Activated CD4-positive, alpha-beta T cell treated with anti-CD3 and anti-CD28 coated beads, Interleukin-2, amount 10 ng/mL, durations not matched to agents 24 days and 14 days (primary cell): ENCODE measurements at regions of chr17 and their contacts with region 1.

Region 1: GRCh38 chr17:38868817-38869525 is 887 bp upstream of the LASP1 start:
- DNase-seq: peak; percentile 95
- H3K4me3 Mint-ChIP-seq: peak overlapping the region; percentile 97
- H3K27ac Mint-ChIP-seq: peak overlapping the region; percentile 96
- H3K4me1 Mint-ChIP-seq: peaks cover 42% of the 10 kb centered on the region
- H3K27me3 Mint-ChIP-seq: peaks cover 2% of the 10 kb centered on the region

Region 2: DNA sequence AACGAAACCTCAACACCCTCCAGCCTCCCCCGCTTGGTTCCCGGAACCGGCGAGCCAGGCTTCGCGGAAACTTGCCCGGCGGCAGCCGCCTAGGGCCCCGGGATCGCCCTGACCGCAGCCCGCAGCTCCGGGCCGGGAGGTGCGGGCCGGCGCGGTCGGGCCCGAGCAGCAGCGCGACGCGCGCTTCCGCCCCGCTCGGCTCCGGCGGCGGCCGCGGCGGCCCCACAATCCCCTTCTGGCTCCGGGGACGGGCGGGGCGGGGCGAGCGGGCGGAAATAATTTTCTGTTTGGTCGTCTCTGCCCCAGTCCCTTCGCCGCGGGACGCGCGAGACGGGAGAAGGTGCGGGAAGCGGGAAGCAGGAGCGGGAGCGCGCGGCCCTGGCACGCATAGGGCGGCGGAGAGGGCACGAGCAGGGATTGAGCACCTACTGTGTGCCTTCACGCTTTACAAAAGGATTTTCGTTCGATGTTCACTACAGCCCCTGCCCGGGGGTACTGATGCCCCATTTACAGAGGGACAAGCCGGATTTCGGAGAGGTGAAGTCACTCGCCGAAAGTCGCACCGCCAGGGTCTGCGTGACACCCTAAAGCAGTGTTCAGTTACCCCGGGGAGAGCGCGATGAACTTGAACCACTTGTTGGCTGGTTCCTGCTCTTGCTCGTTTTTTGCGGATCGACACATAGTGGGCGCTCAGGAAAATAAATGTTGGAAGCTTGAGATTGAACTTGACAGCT is 166.6 kb before region 1 on chr17:
- intact Hi-C with region 1: loop called (anchors 1 kb)
- DNase-seq: peak; percentile 93
- H3K4me3 Mint-ChIP-seq: peak overlapping the region; percentile 90
- H3K27ac Mint-ChIP-seq: peak overlapping the region; percentile 100
- H3K4me1 Mint-ChIP-seq: peaks cover 47% of the 10 kb centered on the region
- H3K27me3 Mint-ChIP-seq: no peaks in the 10 kb centered on the region

Region 3: DNA sequence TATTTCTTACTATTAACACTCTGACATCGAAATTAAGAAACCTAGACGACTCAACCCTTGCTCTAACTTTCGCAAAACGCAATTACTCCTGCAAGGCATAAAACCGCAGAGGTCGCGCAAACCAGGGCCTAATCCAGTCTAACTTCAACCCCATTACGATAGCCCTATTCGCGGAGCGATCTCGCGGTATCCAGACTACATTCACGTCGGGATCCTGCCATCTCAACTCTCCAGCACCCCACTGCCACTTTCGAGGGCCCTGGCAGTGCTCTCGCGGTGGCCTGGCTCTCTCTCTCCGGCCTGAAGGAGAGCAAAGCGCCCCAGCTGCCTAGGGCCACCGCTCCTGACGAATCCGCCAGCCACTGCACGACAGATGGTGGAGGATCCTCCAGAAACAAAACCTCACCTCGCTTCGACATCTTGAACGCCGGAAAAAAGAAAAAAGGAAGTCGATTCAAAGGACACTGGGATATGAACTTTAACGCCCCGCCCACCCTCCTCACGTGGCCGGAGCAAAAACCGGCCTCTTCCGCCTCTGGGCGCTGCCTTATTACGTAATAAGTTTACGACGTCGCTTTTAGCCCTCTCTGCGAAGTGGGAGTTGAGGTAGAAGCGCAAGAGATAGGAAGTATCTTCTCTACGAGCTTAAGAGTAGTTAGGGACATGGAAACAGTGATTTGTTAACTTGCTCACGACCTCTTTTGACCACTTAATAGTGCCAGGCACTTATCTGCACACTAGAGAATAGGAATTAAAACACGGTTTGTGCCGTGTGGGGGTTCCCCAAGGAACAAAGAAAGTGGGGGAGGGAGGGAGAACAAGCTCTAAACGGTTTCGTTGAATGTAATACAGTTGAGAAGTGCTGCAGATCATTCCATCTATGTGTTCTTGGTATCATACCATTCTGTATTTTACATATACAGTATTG is 15.4 kb before region 1 on chr17 and contains the start of gene RPL23:
- intact Hi-C with region 1: loop called (anchors 1 kb)
- DNase-seq: peak; percentile 97
- H3K4me3 Mint-ChIP-seq: peak within 1 kb of the TSS; percentile 91
- H3K27ac Mint-ChIP-seq: peak within 1 kb of the TSS; percentile 98
- H3K4me1 Mint-ChIP-seq: peaks cover 30% of the 10 kb centered on the region
- H3K27me3 Mint-ChIP-seq: no peaks in the 10 kb centered on the region
- total RNA-seq, gene RPL23: 1,994 and 2,005 TPM in 2 replicates

Region 4: GRCh38 chr17:38898812-38899348 is 29.9 kb after region 1 on chr17:
- intact Hi-C with region 1: loop called (anchors 1 kb)
- DNase-seq: peak; percentile 93
- H3K4me3 Mint-ChIP-seq: peak overlapping the region; percentile 75
- H3K27ac Mint-ChIP-seq: peak overlapping the region; percentile 91
- H3K4me1 Mint-ChIP-seq: peaks cover 46% of the 10 kb centered on the region
- H3K27me3 Mint-ChIP-seq: no peaks in the 10 kb centered on the region

Region 5: DNA sequence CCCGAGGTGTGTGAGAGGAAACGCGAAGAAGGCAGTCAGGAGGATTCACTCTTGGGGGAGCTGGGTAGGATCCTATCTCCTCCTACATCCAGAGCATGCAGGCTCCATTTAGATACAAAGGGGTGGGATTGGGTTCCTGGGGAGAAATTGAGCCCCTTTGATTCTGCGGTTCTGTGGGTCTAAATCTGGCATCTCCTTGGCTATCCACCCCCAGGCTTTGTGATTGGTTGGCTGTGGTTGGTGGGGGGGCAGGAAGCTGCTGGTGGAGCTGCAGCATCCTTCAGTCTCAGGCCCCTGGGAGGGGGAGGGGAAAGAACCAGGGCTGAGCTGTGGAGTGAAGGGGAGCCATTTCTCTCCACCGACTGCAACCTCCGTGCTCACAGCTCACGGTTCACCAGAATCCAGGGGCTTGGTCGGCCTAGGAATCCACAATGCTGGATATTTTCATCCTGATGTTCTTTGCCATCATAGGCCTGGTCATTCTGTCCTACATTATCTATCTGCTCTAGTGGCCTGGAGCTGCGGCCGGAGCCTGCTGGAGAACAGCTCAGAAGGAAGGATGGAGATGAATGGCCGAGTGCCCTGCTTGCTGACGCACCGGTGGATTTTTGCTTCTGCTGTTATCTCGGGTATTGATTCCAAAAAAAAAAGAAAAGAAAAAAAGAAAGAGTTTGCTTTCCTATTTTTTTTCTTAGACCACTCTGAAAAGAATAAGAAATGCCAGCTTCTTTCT is 56.5 kb after region 1 on chr17 and contains the start of gene LASP1NB:
- intact Hi-C with region 1: loop called (anchors 2 kb)
- DNase-seq: peak; percentile 79
- H3K4me3 Mint-ChIP-seq: peak within 1 kb of the TSS; percentile 0
- H3K27ac Mint-ChIP-seq: peak within 1 kb of the TSS; percentile 14
- H3K4me1 Mint-ChIP-seq: peaks cover 28% of the 10 kb centered on the region
- H3K27me3 Mint-ChIP-seq: no peaks in the 10 kb centered on the region